AG04449 (cell line): ENCODE measurements at regions of chr3 and their contacts with region 1.

Region 1: GRCh38 chr3:87260270-87260669 is 16.1 kb downstream of the POU1F1 start:
- DNase-seq: peak; percentile 4
- H3K4me3 ChIP-seq: no peak overlapping the region
- CTCF ChIP-seq: peak; percentile 40

Region 2: GRCh38 chr3:87247430-87247773 is 12.9 kb before region 1 on chr3:
- CTCF ChIA-PET with region 1: interaction called, 75 read pairs
- POLR2A ChIA-PET with region 1: no interaction called
- DNase-seq: no peak
- H3K4me3 ChIP-seq: no peak overlapping the region
- CTCF ChIP-seq: no peak

Region 3: GRCh38 chr3:87270908-87271700 is 10.8 kb after region 1 on chr3:
- CTCF ChIA-PET with region 1: interaction called, 41 read pairs
- POLR2A ChIA-PET with region 1: no interaction called
- DNase-seq: no peak
- H3K4me3 ChIP-seq: no peak overlapping the region
- CTCF ChIP-seq: no peak

Region 4: GRCh38 chr3:87276484-87276883 is 16.2 kb after region 1 on chr3 and contains the start of gene POU1F1:
- CTCF ChIA-PET with region 1: interaction called, 41 read pairs
- POLR2A ChIA-PET with region 1: no interaction called
- DNase-seq: no peak
- H3K4me3 ChIP-seq: no peak within 1 kb of the TSS
- CTCF ChIP-seq: no peak

Region 5: GRCh38 chr3:87287011-87287410 is 26.7 kb after region 1 on chr3:
- CTCF ChIA-PET with region 1: interaction called, 16 read pairs
- POLR2A ChIA-PET with region 1: no interaction called
- DNase-seq: peak; percentile 23
- H3K4me3 ChIP-seq: no peak overlapping the region
- CTCF ChIP-seq: no peak

Region 6: GRCh38 chr3:87503900-87504508 is 243.7 kb after region 1 on chr3:
- CTCF ChIA-PET with region 1: interaction called, 25 read pairs
- POLR2A ChIA-PET with region 1: no interaction called
- DNase-seq: peak; percentile 50
- H3K4me3 ChIP-seq: no peak overlapping the region
- CTCF ChIP-seq: peak; percentile 59

Region 7: GRCh38 chr3:88003115-88003755 is 743.0 kb after region 1 on chr3:
- CTCF ChIA-PET with region 1: interaction called, 42 read pairs
- POLR2A ChIA-PET with region 1: no interaction called
- DNase-seq: no peak
- H3K4me3 ChIP-seq: no peak overlapping the region
- CTCF ChIP-seq: peak; percentile 46